ENCODE measurements at regions of chr1 and their contacts with region 1.

Region 1: GRCh38 chr1:95116580-95117206 is 462 bp upstream of the TLCD4 start:
- DNase-seq: peak; percentile 22
- ATAC-seq: peak; percentile 42
- H3K4me3 ChIP-seq: peak overlapping the region; percentile 66
- H3K27ac ChIP-seq: no peak overlapping the region
- H3K4me1 ChIP-seq: no peaks in the 10 kb centered on the region
- H3K27me3 ChIP-seq: peaks cover 30% of the 10 kb centered on the region
- CTCF ChIP-seq: peak; percentile 35
- POLR2A ChIP-seq: no peak
- RAD21 ChIP-seq: peak; percentile 27; the same call in 1 of the 2 replicates

Region 2: DNA sequence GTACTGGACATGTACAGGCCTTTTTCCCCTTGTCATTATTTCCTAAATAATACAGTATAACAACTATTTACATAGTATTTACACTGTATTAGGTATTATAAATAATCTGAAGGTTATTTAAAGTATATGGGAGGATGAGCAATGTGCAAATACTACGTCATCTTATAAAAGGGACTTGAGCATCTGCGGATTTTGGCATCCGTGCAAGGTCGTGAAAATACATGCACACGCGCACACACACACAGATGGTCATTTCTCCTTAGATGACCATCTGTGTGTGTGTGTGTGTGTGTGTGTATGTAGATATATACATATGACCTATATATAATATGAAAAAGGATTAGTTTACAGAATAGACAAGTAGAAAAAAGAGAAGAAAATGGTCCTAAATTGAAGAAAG is 59.3 kb before region 1 on chr1:
- CTCF ChIA-PET with region 1: no interaction called
- POLR2A ChIA-PET with region 1: no interaction called
- dilution Hi-C with region 1: no loop called
- in situ Hi-C with region 1: no loop called
- intact Hi-C with region 1: no loop called
- DNase-seq: no peak
- ATAC-seq: no peak
- H3K4me3 ChIP-seq: no peak overlapping the region
- H3K27ac ChIP-seq: no peak overlapping the region
- H3K4me1 ChIP-seq: no peaks in the 10 kb centered on the region; the same call in 1 of the 2 replicates
- H3K27me3 ChIP-seq: no peaks in the 10 kb centered on the region
- CTCF ChIP-seq: no peak
- POLR2A ChIP-seq: no peak
- RAD21 ChIP-seq: no peak

Region 3: GRCh38 chr1:95072532-95073419 is 43.9 kb before region 1 on chr1 and contains the start of gene ALG14:
- CTCF ChIA-PET with region 1: no interaction called
- POLR2A ChIA-PET with region 1: no interaction called
- dilution Hi-C with region 1: no loop called
- in situ Hi-C with region 1: no loop called
- intact Hi-C with region 1: loop called (anchors 1 kb)
- DNase-seq: peak; percentile 96
- ATAC-seq: peak; percentile 98
- H3K4me3 ChIP-seq: peak within 1 kb of the TSS; percentile 67
- H3K27ac ChIP-seq: peak within 1 kb of the TSS; percentile 97
- H3K4me1 ChIP-seq: peaks cover 2% of the 10 kb centered on the region; the same call in 1 of the 2 replicates
- H3K27me3 ChIP-seq: no peaks in the 10 kb centered on the region
- CTCF ChIP-seq: no peak
- POLR2A ChIP-seq: peak; percentile 34; the same call in 1 of the 2 replicates
- RAD21 ChIP-seq: no peak; the same call in 1 of the 2 replicates
- total RNA-seq, gene ALG14: 1.4 and 2.0 TPM in 2 replicates

Measured in IMR-90 (cell line).